Activated CD8-positive, alpha-beta T cell treated with anti-CD3 and anti-CD28 coated beads, Interleukin-2, amount 10 ng/mL, durations not matched to agents 7 days and 5 days (primary cell): ENCODE measurements at regions of chr3 and their contacts with region 1.

Region 1: DNA sequence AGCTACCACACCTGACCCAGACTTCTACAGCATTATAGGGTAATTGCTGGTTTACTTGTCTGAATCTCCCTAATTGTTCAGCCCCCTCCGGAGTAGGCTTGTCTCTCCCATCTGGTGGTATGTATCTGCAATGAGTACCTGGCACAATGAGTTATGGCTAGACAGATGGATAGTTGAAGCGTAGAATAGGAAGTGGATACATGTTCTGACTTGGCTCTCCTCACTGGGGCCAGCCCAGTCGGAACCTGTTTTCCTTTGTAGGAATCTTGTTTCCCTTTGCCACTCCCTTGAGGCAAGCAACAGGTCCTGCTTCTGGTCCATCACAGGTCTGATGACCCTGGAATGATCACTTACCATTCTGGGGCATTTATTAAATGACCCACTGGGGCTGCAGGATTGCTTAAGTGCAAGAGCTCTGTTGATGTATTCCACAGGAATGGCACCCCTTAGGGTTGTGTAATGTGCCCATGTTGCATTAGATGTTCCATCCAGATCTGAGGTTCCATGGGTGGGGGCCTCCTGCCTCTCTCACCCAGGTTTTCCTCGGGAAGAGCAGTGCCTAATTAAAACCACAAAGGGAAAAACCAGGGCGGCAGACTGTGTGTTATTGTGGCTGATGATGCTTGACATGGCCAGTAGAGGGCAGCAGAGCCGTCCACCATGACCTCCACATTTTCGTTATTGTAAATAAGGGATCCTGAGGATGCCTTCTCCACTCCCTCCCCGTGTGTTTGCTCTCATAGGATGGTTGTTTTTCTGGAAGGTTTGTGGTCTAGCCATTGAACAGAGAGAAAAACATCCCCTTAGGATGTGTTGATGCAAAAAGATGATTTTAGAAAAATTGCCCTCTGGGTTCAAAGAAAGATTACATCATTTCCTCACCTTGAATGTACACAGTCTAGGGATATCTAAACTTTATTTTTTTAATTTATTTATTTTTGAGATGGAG is 58.0 kb downstream of the CMTM8 start:
- DNase-seq: peak; percentile 74
- ATAC-seq: peak; percentile 86
- H3K4me3 Mint-ChIP-seq: peak overlapping the region; percentile 35
- H3K27ac Mint-ChIP-seq: peak overlapping the region; percentile 74
- H3K4me1 Mint-ChIP-seq: peaks cover 19% of the 10 kb centered on the region
- H3K27me3 Mint-ChIP-seq: no peaks in the 10 kb centered on the region

Region 2: GRCh38 chr3:32285891-32286290 is 10.6 kb before region 1 on chr3:
- CTCF ChIA-PET with region 1: interaction called, 31 read pairs
- POLR2A ChIA-PET with region 1: no interaction called
- DNase-seq: no peak
- ATAC-seq: no peak
- H3K4me3 Mint-ChIP-seq: no peak overlapping the region
- H3K27ac Mint-ChIP-seq: no peak overlapping the region
- H3K4me1 Mint-ChIP-seq: peaks cover 7% of the 10 kb centered on the region
- H3K27me3 Mint-ChIP-seq: no peaks in the 10 kb centered on the region

Region 3: GRCh38 chr3:32313723-32314473 is 17.4 kb after region 1 on chr3:
- CTCF ChIA-PET with region 1: interaction called, 28 read pairs
- POLR2A ChIA-PET with region 1: no interaction called
- DNase-seq: peak; percentile 28
- ATAC-seq: peak; percentile 68
- H3K4me3 Mint-ChIP-seq: no peak overlapping the region
- H3K27ac Mint-ChIP-seq: peak overlapping the region; percentile 62
- H3K4me1 Mint-ChIP-seq: peaks cover 14% of the 10 kb centered on the region
- H3K27me3 Mint-ChIP-seq: peaks cover 3% of the 10 kb centered on the region

Region 4: GRCh38 chr3:32325957-32326356 is 29.4 kb after region 1 on chr3:
- CTCF ChIA-PET with region 1: interaction called, 15 read pairs
- POLR2A ChIA-PET with region 1: no interaction called
- DNase-seq: no peak
- ATAC-seq: no peak
- H3K4me3 Mint-ChIP-seq: no peak overlapping the region
- H3K27ac Mint-ChIP-seq: no peak overlapping the region
- H3K4me1 Mint-ChIP-seq: no peaks in the 10 kb centered on the region
- H3K27me3 Mint-ChIP-seq: peaks cover 4% of the 10 kb centered on the region

Region 5: GRCh38 chr3:32334675-32335074 is 38.1 kb after region 1 on chr3:
- CTCF ChIA-PET with region 1: interaction called, 68 read pairs
- POLR2A ChIA-PET with region 1: no interaction called
- DNase-seq: peak; percentile 56
- ATAC-seq: peak; percentile 60
- H3K4me3 Mint-ChIP-seq: no peak overlapping the region
- H3K27ac Mint-ChIP-seq: no peak overlapping the region
- H3K4me1 Mint-ChIP-seq: peaks cover 18% of the 10 kb centered on the region
- H3K27me3 Mint-ChIP-seq: no peaks in the 10 kb centered on the region

Region 6: GRCh38 chr3:32340039-32340438 is 43.5 kb after region 1 on chr3:
- CTCF ChIA-PET with region 1: interaction called, 68 read pairs
- POLR2A ChIA-PET with region 1: no interaction called
- DNase-seq: peak; percentile 39
- ATAC-seq: peak; percentile 80
- H3K4me3 Mint-ChIP-seq: no peak overlapping the region
- H3K27ac Mint-ChIP-seq: no peak overlapping the region
- H3K4me1 Mint-ChIP-seq: peaks cover 11% of the 10 kb centered on the region
- H3K27me3 Mint-ChIP-seq: no peaks in the 10 kb centered on the region

Region 7: DNA sequence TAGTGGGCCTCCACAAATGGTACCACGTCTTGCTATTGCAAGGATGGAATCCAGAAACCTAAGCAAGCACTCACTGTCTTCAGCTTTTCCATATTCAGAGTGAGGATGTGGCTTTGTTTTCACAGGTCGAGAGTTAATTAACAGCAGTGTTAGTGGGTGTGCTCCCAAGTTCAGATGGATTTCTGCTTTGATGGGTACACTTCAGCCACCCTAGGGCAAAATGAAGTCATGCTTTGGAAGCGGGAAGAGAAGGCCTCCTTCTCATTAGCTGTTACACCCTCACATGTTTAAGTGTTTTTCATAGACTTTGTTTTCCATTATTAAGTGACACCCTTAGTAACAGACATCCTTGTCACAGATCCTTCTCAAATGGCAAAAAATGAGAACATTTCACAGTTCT is 310.4 kb after region 1 on chr3:
- CTCF ChIA-PET with region 1: no interaction called
- POLR2A ChIA-PET with region 1: no interaction called
- DNase-seq: no peak
- ATAC-seq: no peak
- H3K4me3 Mint-ChIP-seq: no peak overlapping the region
- H3K27ac Mint-ChIP-seq: no peak overlapping the region
- H3K4me1 Mint-ChIP-seq: no peaks in the 10 kb centered on the region
- H3K27me3 Mint-ChIP-seq: peaks cover 11% of the 10 kb centered on the region

Region 8: GRCh38 chr3:33277193-33277882 is 980.8 kb after region 1 on chr3 and contains the start of gene FBXL2:
- CTCF ChIA-PET with region 1: no interaction called
- POLR2A ChIA-PET with region 1: no interaction called
- DNase-seq: peak; percentile 26
- ATAC-seq: peak; percentile 74
- H3K4me3 Mint-ChIP-seq: peak within 1 kb of the TSS; percentile 42
- H3K27ac Mint-ChIP-seq: no peak within 1 kb of the TSS
- H3K4me1 Mint-ChIP-seq: no peaks in the 10 kb centered on the region
- H3K27me3 Mint-ChIP-seq: peaks cover 26% of the 10 kb centered on the region
- total RNA-seq, gene FBXL2: not detected